HCT116 (cell line): ENCODE measurements at regions of chr9 and their contacts with region 1.

Region 1: GRCh38 chr9:37485389-37486219 is at the start of gene POLR1E:
- DNase-seq: peak; percentile 84
- ATAC-seq: peak; percentile 91
- H3K4me3 ChIP-seq: peak within 1 kb of the TSS; percentile 92 to 100
- H3K27ac ChIP-seq: peak within 1 kb of the TSS; percentile 63
- H3K4me1 ChIP-seq: peaks cover 12 to 44% of the 10 kb centered on the region in 2 experiments
- H3K27me3 ChIP-seq: no peaks in the 10 kb centered on the region
- CTCF ChIP-seq: no peak
- POLR2A ChIP-seq: peak; percentile 75
- RAD21 ChIP-seq: no peak
- total RNA-seq, gene POLR1E: 60.9 TPM

Region 2: DNA sequence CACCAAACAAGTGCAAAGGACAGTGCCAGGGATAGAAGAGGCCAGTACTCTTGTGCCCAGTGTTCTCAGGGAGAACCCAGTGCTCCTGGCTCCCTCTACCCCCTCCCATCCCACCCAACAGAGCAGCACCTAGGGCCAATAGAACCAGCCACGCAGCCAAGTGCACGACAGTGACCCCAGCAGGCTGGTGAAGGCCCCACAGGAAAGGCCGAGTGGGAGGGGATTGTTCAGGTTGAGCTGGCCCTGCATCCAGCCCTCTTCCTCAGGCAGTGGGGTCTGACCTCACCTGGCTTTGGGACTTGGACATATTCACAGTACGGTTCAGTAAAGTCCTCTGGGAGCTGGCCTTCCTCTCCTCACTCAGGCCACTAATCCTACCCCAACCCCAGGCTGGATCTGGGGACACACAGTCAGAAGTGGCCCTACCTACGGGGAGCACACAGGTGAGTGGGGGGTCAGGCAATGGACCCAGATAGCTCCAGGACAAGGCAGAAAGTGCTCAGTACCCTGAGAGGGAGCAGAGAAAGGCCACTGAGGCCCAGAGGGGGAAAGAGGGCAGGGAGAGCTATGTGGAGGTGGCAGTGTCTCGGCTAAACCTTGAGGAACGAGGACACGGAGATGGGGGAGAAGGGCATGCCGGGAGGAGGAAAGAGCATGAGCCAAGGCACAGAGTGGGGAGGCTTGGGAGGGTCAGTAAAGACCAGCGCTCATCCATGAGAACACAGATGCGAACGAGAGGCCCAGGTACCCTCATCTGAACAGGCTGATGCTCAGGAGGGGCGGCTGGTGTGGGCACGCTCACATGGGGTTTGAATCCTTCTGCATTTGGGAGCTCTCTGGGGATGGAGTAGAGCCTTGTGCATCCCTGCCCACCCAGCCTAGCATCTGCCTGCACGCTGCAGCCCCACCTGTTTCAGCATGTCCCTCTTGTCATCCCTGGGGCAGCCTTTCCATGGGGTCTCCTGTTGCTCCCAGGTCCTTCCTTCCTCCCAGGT is 25.7 kb after region 1 on chr9:
- CTCF ChIA-PET with region 1: no interaction called
- POLR2A ChIA-PET with region 1: no interaction called
- RAD21 ChIA-PET with region 1: no interaction called
- intact Hi-C with region 1: no loop called
- DNase-seq: peak; percentile 13
- ATAC-seq: peak; percentile 87
- H3K4me3 ChIP-seq: no peak overlapping the region
- H3K27ac ChIP-seq: no peak overlapping the region
- H3K4me1 ChIP-seq: no peaks in the 10 kb centered on the region; a peak in 1 of 4 replicates
- H3K27me3 ChIP-seq: no peaks in the 10 kb centered on the region
- CTCF ChIP-seq: peak in 2 of 3 experiments; percentile 27 to 53; a peak in 4 of 6 replicates
- POLR2A ChIP-seq: no peak
- RAD21 ChIP-seq: no peak

Region 3: GRCh38 chr9:37582548-37583157 is 97.0 kb after region 1 on chr9:
- CTCF ChIA-PET with region 1: no interaction called
- POLR2A ChIA-PET with region 1: no interaction called
- RAD21 ChIA-PET with region 1: no interaction called
- intact Hi-C with region 1: loop called (anchors 10 kb)
- DNase-seq: peak; percentile 42
- ATAC-seq: peak; percentile 71
- H3K4me3 ChIP-seq: no peak overlapping the region
- H3K27ac ChIP-seq: no peak overlapping the region
- H3K4me1 ChIP-seq: no peaks in the 10 kb centered on the region
- H3K27me3 ChIP-seq: no peaks in the 10 kb centered on the region
- CTCF ChIP-seq: peak; percentile 34 to 73 (median 57); a peak in 5 of 6 replicates
- POLR2A ChIP-seq: no peak
- RAD21 ChIP-seq: peak; percentile 65

Region 4: GRCh38 chr9:37693260-37693659 is 207.7 kb after region 1 on chr9:
- CTCF ChIA-PET with region 1: no interaction called
- POLR2A ChIA-PET with region 1: no interaction called
- RAD21 ChIA-PET with region 1: no interaction called
- intact Hi-C with region 1: no loop called
- DNase-seq: no peak
- ATAC-seq: no peak
- H3K4me3 ChIP-seq: no peak overlapping the region
- H3K27ac ChIP-seq: no peak overlapping the region
- H3K4me1 ChIP-seq: no peaks in the 10 kb centered on the region
- H3K27me3 ChIP-seq: peaks cover 12% of the 10 kb centered on the region
- CTCF ChIP-seq: no peak
- POLR2A ChIP-seq: no peak
- RAD21 ChIP-seq: no peak

Region 5: DNA sequence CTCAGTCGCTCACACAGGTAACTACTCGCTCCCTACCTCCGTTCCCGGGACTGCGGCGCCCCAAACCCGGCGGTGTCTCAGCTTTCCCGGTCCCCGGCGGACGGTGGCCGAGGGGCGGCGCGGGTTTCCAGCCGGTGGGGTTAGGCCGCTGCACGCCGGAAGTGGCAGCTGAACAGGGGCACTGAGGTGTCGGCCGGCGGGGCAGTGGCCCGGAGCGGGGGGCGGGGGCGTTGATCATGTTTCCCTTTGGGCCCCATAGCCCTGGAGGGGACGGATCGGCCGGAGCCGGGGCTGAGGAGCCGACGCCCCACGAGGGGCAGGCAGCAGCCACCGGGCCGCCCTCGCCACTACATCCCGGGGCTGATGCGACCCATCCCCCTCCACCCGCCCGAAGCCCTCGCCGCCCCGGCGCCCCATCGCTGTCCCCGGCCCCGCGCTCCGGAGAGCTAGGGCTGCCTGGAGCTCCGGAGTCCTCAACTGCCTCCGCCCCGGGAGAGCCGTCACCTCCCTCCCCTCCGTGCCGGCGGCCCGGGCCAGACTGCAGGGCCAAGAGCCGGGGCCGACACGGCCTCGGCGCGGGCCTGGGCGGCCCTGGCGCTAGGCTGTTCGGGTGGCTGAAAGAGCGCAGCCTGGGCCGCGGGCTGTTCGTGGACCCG is 315.2 kb after region 1 on chr9 and contains the start of gene DCAF10:
- CTCF ChIA-PET with region 1: no interaction called
- POLR2A ChIA-PET with region 1: no interaction called
- RAD21 ChIA-PET with region 1: no interaction called
- intact Hi-C with region 1: loop called (anchors 5 kb)
- DNase-seq: peak; percentile 68
- ATAC-seq: peak; percentile 84
- H3K4me3 ChIP-seq: peak within 1 kb of the TSS; percentile 77 to 87
- H3K27ac ChIP-seq: peak within 1 kb of the TSS; percentile 91
- H3K4me1 ChIP-seq: peaks cover 10 to 20% of the 10 kb centered on the region in 2 experiments; a peak in 3 of 4 replicates
- H3K27me3 ChIP-seq: no peaks in the 10 kb centered on the region
- CTCF ChIP-seq: no peak
- POLR2A ChIP-seq: peak; percentile 77
- RAD21 ChIP-seq: no peak
- total RNA-seq, gene DCAF10: 20.6 TPM

Region 6: DNA sequence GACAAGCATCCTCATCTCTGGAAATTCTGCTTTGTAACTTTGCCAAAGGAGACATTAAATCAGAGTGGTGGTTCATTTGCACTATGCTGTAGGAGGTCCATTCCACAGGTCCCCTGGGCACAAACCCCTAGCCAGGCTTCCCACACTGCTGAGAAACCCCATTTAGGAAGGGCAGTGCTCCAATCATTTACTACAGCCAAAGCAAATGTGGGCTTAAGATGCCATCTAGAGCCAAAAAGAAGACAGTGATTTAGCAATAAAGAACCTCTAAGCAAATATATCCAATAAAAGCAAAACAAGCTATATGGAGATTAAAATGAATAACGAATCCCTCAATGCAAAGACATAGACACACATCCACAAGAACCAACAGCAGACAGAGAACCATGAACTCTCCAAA is 777.9 kb after region 1 on chr9:
- CTCF ChIA-PET with region 1: interaction called, 4 read pairs
- POLR2A ChIA-PET with region 1: no interaction called
- RAD21 ChIA-PET with region 1: no interaction called
- intact Hi-C with region 1: loop called (anchors 10 kb)
- DNase-seq: peak; percentile 7
- ATAC-seq: peak; percentile 46; the same call in 1 of the 2 replicates
- H3K4me3 ChIP-seq: no peak overlapping the region
- H3K27ac ChIP-seq: no peak overlapping the region
- H3K4me1 ChIP-seq: no peaks in the 10 kb centered on the region
- H3K27me3 ChIP-seq: no peaks in the 10 kb centered on the region
- CTCF ChIP-seq: peak in 2 of 3 experiments; percentile 40 to 72; a peak in 3 of 6 replicates
- POLR2A ChIP-seq: no peak
- RAD21 ChIP-seq: peak; percentile 86

Region 7: GRCh38 chr9:38392235-38393127 is 906.9 kb after region 1 on chr9 and contains the start of gene ALDH1B1:
- CTCF ChIA-PET with region 1: no interaction called
- POLR2A ChIA-PET with region 1: no interaction called
- RAD21 ChIA-PET with region 1: no interaction called
- intact Hi-C with region 1: loop called (anchors 10 kb)
- DNase-seq: peak; percentile 68
- ATAC-seq: peak; percentile 99
- H3K4me3 ChIP-seq: peak within 1 kb of the TSS; percentile 94 to 98
- H3K27ac ChIP-seq: peak within 1 kb of the TSS; percentile 62
- H3K4me1 ChIP-seq: peaks cover 5 to 13% of the 10 kb centered on the region in 2 experiments; a peak in 3 of 4 replicates
- H3K27me3 ChIP-seq: no peaks in the 10 kb centered on the region
- CTCF ChIP-seq: peak in 2 of 3 experiments; percentile 26 to 32; a peak in 3 of 6 replicates
- POLR2A ChIP-seq: no peak
- RAD21 ChIP-seq: no peak
- total RNA-seq, gene ALDH1B1: 46.6 TPM